Activated T-helper 1 cell treated with anti-CD3 and anti-CD28 coated beads, Interleukin-12 subunit alpha, Interleukin-12 subunit beta, Interleukin-2, Interleukin-4 antibody, amounts not matched to agents 30 ng/mL and 10 ng/mL and 1 ng/mL, durations not matched to agents 14 hours and 24 hours and 36 hours (primary cell): ENCODE measurements at regions of chr1 and their contacts with region 1.

Region 1: GRCh38 chr1:201559679-201560162 is 20.8 kb downstream of the NAV1 start:
- DNase-seq: peak; percentile 41
- H3K4me3 Mint-ChIP-seq: no peak overlapping the region
- H3K27ac Mint-ChIP-seq: no peak overlapping the region
- H3K4me1 Mint-ChIP-seq: peaks cover 6% of the 10 kb centered on the region
- H3K27me3 Mint-ChIP-seq: peaks cover 5% of the 10 kb centered on the region

Region 2: GRCh38 chr1:201170533-201171062 is 389.1 kb before region 1 on chr1:
- intact Hi-C with region 1: no loop called
- DNase-seq: peak; percentile 65
- H3K4me3 Mint-ChIP-seq: peak overlapping the region; percentile 76
- H3K27ac Mint-ChIP-seq: peak overlapping the region; percentile 65
- H3K4me1 Mint-ChIP-seq: peaks cover 6% of the 10 kb centered on the region
- H3K27me3 Mint-ChIP-seq: peaks cover 21% of the 10 kb centered on the region

Region 3: DNA sequence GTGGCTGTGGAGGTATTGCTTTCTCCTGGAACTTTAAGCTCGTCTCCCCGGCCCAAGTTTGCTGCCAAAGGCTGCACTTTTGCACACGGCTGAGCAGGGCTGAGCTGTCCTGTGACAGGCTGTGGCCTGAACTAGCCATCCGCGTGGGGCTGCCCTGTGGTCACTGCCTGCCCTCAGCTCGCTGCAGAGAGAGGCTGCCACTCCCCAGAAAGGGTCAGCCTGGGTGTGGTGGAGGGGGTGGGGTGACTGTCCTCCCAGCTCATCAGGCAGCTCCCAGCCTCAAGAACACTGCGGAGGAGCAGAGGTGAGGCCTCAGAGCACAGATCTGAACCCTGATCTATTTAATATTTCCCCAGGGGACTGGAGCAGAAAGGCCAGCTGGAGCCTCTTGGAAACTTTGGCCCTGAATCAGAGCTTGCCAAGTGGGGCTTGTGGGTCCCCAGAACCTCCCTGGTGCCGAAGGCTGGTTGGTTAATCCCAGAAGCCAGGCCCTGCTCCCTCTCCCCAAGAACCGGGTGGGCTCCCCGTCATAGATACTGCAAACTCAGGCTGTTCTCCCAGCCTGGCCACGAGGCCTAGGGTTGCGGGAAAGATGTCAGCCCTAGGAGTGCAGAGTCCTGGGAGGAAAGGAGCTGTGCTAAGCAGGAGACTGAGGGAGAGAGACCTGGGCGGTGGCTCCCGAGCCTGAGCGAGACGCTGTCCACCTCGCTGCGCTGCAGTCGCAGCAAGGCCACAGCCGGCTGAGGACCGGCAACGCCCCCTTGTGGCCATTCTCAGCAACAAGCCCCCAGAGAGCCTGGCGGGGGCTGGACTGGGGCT is 144.1 kb after region 1 on chr1:
- intact Hi-C with region 1: loop called (anchors 1 kb)
- DNase-seq: peak; percentile 40
- H3K4me3 Mint-ChIP-seq: no peak overlapping the region
- H3K27ac Mint-ChIP-seq: no peak overlapping the region
- H3K4me1 Mint-ChIP-seq: no peaks in the 10 kb centered on the region
- H3K27me3 Mint-ChIP-seq: peaks cover 13% of the 10 kb centered on the region